Activated CD8-positive, alpha-beta memory T cell treated with anti-CD3 and anti-CD28 coated beads, Interleukin-2, amount 10 ng/mL, durations not matched to agents 7 days and 5 days (primary cell): ENCODE measurements at regions of chr6 and their contacts with region 1.

Region 1: GRCh38 chr6:2988426-2989331 is 11.0 kb upstream of the NQO2 start:
- DNase-seq: peak; percentile 86
- ATAC-seq: peak; percentile 81
- H3K4me3 Mint-ChIP-seq: peak overlapping the region; percentile 95
- H3K27ac Mint-ChIP-seq: peak overlapping the region; percentile 99
- H3K4me1 Mint-ChIP-seq: peaks cover 20% of the 10 kb centered on the region
- H3K27me3 Mint-ChIP-seq: peaks cover 3% of the 10 kb centered on the region

Region 2: GRCh38 chr6:2791124-2791974 is 197.3 kb before region 1 on chr6:
- CTCF ChIA-PET with region 1: interaction called, 42 read pairs
- DNase-seq: peak; percentile 86
- ATAC-seq: peak; percentile 82
- H3K4me3 Mint-ChIP-seq: no peak overlapping the region
- H3K27ac Mint-ChIP-seq: peak overlapping the region; percentile 76
- H3K4me1 Mint-ChIP-seq: peaks cover 37% of the 10 kb centered on the region
- H3K27me3 Mint-ChIP-seq: no peaks in the 10 kb centered on the region

Region 3: DNA sequence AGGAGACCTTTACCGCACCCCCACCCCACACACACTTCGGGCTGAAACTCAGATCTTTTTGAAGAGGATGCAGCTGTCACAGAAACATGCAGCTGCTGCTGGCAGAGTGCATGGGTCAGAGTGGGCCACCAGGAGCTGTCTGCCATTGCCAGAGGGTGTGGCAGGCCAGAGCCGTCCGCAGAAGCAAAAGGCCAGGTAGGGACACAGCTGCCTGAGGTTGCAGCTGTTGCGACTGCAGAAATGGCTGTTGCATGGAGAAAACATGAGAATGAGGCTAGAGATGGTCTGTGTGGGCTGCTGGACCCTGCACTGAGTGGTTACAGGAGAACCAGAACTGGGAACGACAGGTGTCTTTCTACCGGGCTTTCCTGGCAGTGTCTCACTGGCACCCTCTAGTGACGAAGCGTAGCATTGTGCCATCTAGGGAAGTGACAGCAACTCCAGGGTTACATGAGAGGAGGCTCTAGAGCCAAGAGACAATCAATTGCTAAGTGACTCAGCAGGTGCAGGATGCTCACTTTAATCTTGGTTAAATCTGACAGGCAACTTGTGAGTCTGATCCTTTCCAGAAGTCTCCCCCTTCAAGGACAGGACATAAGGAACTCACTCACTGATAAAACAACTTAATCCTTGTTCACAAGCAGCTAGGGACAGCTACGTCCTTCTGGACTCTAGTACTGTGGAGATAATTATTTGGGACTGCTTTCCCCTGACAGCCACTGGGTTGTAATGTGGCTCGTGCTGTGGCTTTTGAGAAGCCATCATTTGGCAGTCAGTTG is 56.5 kb before region 1 on chr6:
- CTCF ChIA-PET with region 1: interaction called, 31 read pairs
- DNase-seq: peak; percentile 92
- ATAC-seq: peak; percentile 91
- H3K4me3 Mint-ChIP-seq: no peak overlapping the region
- H3K27ac Mint-ChIP-seq: peak overlapping the region; percentile 48
- H3K4me1 Mint-ChIP-seq: peaks cover 20% of the 10 kb centered on the region
- H3K27me3 Mint-ChIP-seq: peaks cover 7% of the 10 kb centered on the region

Region 4: GRCh38 chr6:2940010-2940850 is 48.4 kb before region 1 on chr6:
- CTCF ChIA-PET with region 1: interaction called, 31 read pairs
- DNase-seq: peak; percentile 92
- ATAC-seq: peak; percentile 90
- H3K4me3 Mint-ChIP-seq: peak overlapping the region; percentile 73
- H3K27ac Mint-ChIP-seq: peak overlapping the region; percentile 99
- H3K4me1 Mint-ChIP-seq: peaks cover 56% of the 10 kb centered on the region
- H3K27me3 Mint-ChIP-seq: peaks cover 29% of the 10 kb centered on the region

Region 5: GRCh38 chr6:2952557-2953095 is 36.1 kb before region 1 on chr6:
- CTCF ChIA-PET with region 1: interaction called, 41 read pairs
- DNase-seq: peak; percentile 59
- ATAC-seq: peak; percentile 64
- H3K4me3 Mint-ChIP-seq: no peak overlapping the region
- H3K27ac Mint-ChIP-seq: no peak overlapping the region
- H3K4me1 Mint-ChIP-seq: peaks cover 3% of the 10 kb centered on the region
- H3K27me3 Mint-ChIP-seq: no peaks in the 10 kb centered on the region

Region 6: DNA sequence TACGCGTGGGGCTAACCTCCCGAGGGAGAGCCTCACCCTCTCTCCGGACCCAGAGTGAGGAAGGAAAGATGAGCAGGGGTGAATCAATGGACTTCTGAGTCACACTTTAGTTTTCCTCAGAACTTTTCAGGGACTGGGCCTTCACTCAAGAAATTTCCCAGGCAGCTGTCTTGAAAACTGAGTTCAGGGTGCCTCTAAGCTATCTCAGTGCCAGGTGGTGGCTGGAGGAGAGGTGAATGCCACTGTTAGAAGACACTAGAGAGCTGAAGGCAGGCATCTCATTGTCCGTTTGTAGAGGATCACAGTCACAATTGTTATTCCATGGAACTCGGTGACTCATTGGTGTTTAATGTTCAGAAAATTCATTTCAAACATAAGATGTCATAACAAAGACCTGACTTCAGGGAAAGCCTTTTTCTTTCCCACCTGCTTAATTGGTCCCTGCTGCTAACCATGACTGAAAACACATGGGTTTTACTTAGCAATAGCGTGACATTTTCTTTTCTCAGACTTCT is 12.1 kb before region 1 on chr6:
- CTCF ChIA-PET with region 1: interaction called, 32 read pairs
- DNase-seq: peak; percentile 35
- ATAC-seq: no peak
- H3K4me3 Mint-ChIP-seq: peak overlapping the region; percentile 24
- H3K27ac Mint-ChIP-seq: peak overlapping the region; percentile 75
- H3K4me1 Mint-ChIP-seq: peaks cover 44% of the 10 kb centered on the region
- H3K27me3 Mint-ChIP-seq: peaks cover 10% of the 10 kb centered on the region

Region 7: DNA sequence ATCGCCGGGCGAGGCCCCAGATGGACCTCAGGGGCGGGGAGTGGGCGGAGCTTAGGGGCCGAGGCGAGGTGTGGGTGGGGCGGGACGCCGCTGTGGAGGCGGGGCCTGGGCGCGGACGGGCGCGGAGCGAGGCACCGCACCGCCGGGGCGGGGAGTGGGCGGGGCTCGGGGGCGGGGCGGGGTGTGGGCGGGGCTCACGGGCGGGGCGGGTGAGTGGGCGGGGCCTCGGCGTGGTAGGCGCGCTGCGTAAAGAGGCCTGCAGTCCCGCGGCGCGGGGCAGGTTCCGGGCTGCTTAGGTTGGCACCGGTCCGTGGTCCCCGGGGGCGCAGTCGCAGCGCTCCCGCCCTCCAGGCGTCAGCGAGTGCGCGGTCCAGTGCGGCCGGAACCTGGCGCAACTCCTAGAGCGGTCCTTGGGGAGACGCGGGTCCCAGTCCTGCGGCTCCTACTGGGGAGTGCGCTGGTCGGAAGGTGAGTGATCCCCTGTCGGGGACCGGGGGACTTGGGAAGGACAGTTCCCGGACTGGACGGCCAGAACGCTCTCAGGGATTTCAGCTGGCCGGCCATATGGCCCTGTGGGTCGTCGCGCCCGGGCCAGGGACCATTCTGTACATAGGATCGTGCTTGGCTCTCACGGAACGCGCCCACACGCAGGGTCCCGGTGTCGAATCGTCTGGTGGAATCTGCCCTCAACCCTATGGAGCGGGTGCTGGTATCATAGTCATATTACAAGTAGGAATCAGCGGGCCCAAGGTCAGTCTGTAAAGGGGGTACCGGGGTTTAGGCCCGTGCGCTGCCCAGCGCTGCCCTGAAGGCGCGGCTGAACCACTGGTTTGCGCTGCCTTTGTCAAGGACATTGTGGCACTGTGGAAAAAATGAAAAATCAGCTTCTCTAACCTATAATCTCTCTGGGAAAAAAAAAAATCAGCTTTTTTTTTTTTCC is 11.2 kb after region 1 on chr6 and contains the start of gene NQO2:
- CTCF ChIA-PET with region 1: interaction called, 25 read pairs
- DNase-seq: peak; percentile 95
- ATAC-seq: peak; percentile 88
- H3K4me3 Mint-ChIP-seq: peak within 1 kb of the TSS; percentile 86
- H3K27ac Mint-ChIP-seq: peak within 1 kb of the TSS; percentile 91
- H3K4me1 Mint-ChIP-seq: peaks cover 32% of the 10 kb centered on the region
- H3K27me3 Mint-ChIP-seq: peaks cover 7% of the 10 kb centered on the region
- total RNA-seq, gene NQO2: 11.9 to 14.5 TPM